ENCODE measurements at regions of chr7 and their contacts with region 1.

Region 1: GRCh38 chr7:101017064-101017777 is 2.7 kb upstream of the MUC17 start:
- DNase-seq: peak; percentile 40
- H3K4me3 ChIP-seq: no peak overlapping the region
- H3K27ac ChIP-seq: no peak overlapping the region
- H3K4me1 ChIP-seq: peaks cover 3% of the 10 kb centered on the region
- H3K27me3 ChIP-seq: no peaks in the 10 kb centered on the region
- CTCF ChIP-seq: no peak
- POLR2A ChIP-seq: no peak

Region 2: GRCh38 chr7:100965723-100966541 is 51.3 kb before region 1 on chr7:
- CTCF ChIA-PET with region 1: interaction called, 3 read pairs
- POLR2A ChIA-PET with region 1: no interaction called
- dilution Hi-C with region 1: no loop called
- intact Hi-C with region 1: loop called (anchors 10 kb)
- DNase-seq: peak; percentile 49
- H3K4me3 ChIP-seq: no peak overlapping the region
- H3K27ac ChIP-seq: no peak overlapping the region
- H3K4me1 ChIP-seq: peaks cover 2% of the 10 kb centered on the region
- H3K27me3 ChIP-seq: peaks cover 22 to 28% of the 10 kb centered on the region in 2 experiments
- CTCF ChIP-seq: peak; percentile 92 to 93
- POLR2A ChIP-seq: no peak

Region 3: GRCh38 chr7:101235050-101235449 is 217.8 kb after region 1 on chr7:
- CTCF ChIA-PET with region 1: no interaction called
- POLR2A ChIA-PET with region 1: no interaction called
- dilution Hi-C with region 1: no loop called
- intact Hi-C with region 1: no loop called
- DNase-seq: peak; percentile 27
- H3K4me3 ChIP-seq: no peak overlapping the region
- H3K27ac ChIP-seq: no peak overlapping the region
- H3K4me1 ChIP-seq: peaks cover 38% of the 10 kb centered on the region
- H3K27me3 ChIP-seq: no peaks in the 10 kb centered on the region
- CTCF ChIP-seq: peak; percentile 20 to 50
- POLR2A ChIP-seq: no peak